ENCODE measurements at regions of chr5 and their contacts with region 1.

Region 1: DNA sequence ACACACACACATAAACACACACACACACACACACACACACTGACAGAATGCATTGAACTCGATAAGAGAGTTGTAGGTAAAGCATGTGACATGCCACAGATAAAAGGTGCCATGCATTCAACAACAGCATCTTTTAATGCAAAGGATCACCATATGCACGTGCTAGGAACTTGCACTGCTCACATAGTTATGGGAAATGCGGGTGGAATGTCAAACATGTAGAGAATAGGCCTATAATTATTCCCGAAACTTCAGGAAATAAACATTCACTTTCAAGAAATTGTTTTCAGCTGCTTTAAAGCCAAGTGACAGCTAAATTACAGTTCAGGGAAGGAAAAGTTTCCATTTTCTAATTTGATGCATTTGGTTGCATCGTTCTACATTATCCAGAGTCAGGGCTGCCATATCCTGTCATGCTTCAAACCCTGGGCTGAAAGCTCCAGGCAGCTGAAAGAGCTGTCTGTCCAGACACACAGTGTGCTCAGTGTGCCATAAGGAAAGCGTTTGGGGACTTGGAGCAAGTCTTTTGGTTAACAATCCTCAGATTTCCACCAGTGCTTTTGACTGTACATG is 518.0 kb downstream of the CSNK1G3 start:
- DNase-seq: peak; percentile 2
- H3K4me3 ChIP-seq: no peak overlapping the region
- H3K27ac ChIP-seq: peak overlapping the region in 1 of 2 experiments; percentile 51; a peak in 2 of 4 replicates
- H3K4me1 ChIP-seq: peaks cover 0 to 4% of the 10 kb centered on the region in 2 experiments; a peak in 1 of 4 replicates
- H3K27me3 ChIP-seq: no peaks in the 10 kb centered on the region
- CTCF ChIP-seq: no peak
- EP300 ChIP-seq: no peak
- RAD21 ChIP-seq: no peak

Region 2: DNA sequence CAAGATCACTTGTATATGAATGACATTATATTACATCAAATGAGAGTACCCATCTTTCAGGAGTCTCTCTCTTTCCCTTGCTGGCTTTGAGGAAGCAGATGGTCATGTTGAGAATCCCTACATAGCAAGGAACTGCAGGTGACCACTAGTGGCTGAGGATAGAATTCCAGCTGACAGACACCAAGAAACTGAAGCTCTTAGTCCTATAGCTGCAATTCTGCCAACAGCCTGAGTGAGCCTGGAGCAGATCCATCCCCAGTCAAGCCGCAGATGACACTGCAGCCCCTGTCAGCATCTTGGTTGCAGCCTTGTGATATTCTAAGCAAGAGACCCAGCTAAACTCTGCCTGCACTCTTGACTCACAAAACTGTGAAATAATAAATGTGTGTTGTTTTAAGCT is 13.5 kb after region 1 on chr5:
- CTCF ChIA-PET with region 1: interaction called, 13 read pairs
- POLR2A ChIA-PET with region 1: no interaction called
- DNase-seq: peak; percentile 2
- H3K4me3 ChIP-seq: no peak overlapping the region
- H3K27ac ChIP-seq: no peak overlapping the region
- H3K4me1 ChIP-seq: no peaks in the 10 kb centered on the region; a peak in 1 of 4 replicates
- H3K27me3 ChIP-seq: no peaks in the 10 kb centered on the region
- CTCF ChIP-seq: no peak
- EP300 ChIP-seq: no peak
- RAD21 ChIP-seq: no peak

Region 3: GRCh38 chr5:124193371-124193789 is 163.4 kb after region 1 on chr5:
- CTCF ChIA-PET with region 1: no interaction called
- POLR2A ChIA-PET with region 1: no interaction called
- DNase-seq: peak; percentile 56
- H3K4me3 ChIP-seq: no peak overlapping the region
- H3K27ac ChIP-seq: peak overlapping the region; percentile 29 to 90; a peak in 3 of 4 replicates
- H3K4me1 ChIP-seq: peaks cover 10 to 16% of the 10 kb centered on the region in 2 experiments; a peak in 3 of 4 replicates
- H3K27me3 ChIP-seq: no peaks in the 10 kb centered on the region
- CTCF ChIP-seq: no peak
- EP300 ChIP-seq: peak; percentile 26 to 84; a peak in 2 of 4 replicates
- RAD21 ChIP-seq: peak; percentile 50